Prostate gland (tissue), 2 donors: ENCODE measurements at regions of chr6 and their contacts with region 1.

Region 1: GRCh38 chr6:27518881-27519795 is 46.2 kb upstream of the ZNF184 start:
- DNase-seq: peak; percentile 56
- H3K4me3 ChIP-seq: peak overlapping the region; percentile 55 to 78
- H3K27ac ChIP-seq: peak overlapping the region; percentile 85 to 95
- H3K4me1 ChIP-seq: no peaks in the 10 kb centered on the region
- H3K27me3 ChIP-seq: no peaks in the 10 kb centered on the region
- CTCF ChIP-seq: peak; percentile 39 to 69 (median 55)
- POLR2A ChIP-seq: no peak

Region 2: DNA sequence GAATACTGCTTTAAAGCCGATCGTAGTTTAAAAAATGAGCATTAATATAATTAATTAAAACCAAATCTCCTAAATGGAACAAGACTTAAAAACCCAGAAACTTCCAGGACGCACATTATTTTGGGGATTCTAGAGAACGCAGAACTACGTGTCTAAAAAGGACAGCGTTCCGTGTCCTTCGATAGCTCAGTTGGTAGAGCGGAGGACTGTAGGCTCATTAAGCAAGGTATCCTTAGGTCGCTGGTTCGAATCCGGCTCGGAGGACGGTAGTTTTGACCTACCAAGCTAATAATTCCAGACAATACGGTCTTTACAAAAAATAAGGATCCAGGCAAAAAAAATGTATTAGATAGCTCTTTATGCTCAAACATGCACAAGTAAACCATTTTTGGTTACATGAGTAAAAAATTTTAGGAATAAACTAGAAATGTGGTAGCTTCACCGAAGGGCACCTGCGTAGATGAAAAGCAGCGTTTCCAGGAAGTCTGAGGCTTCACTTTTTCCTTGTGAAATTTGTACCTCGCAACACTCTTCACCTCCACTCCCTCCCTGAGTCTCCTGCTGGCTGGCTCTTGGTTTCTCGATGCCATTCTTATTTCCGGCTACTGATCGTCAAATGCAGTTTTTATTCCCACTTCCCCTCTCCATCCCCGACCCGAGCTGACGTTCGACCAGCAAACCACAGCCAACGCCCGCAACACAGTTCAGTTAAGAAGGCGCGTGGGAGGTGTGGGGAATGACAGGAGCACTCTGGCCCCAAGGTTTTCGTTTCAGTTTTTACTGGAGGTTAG is 942.0 kb before region 1 on chr6:
- intact Hi-C with region 1: no loop called
- DNase-seq: no peak
- H3K4me3 ChIP-seq: no peak overlapping the region
- H3K27ac ChIP-seq: no peak overlapping the region
- H3K4me1 ChIP-seq: no peaks in the 10 kb centered on the region
- H3K27me3 ChIP-seq: no peaks in the 10 kb centered on the region
- CTCF ChIP-seq: no peak
- POLR2A ChIP-seq: no peak

Region 3: DNA sequence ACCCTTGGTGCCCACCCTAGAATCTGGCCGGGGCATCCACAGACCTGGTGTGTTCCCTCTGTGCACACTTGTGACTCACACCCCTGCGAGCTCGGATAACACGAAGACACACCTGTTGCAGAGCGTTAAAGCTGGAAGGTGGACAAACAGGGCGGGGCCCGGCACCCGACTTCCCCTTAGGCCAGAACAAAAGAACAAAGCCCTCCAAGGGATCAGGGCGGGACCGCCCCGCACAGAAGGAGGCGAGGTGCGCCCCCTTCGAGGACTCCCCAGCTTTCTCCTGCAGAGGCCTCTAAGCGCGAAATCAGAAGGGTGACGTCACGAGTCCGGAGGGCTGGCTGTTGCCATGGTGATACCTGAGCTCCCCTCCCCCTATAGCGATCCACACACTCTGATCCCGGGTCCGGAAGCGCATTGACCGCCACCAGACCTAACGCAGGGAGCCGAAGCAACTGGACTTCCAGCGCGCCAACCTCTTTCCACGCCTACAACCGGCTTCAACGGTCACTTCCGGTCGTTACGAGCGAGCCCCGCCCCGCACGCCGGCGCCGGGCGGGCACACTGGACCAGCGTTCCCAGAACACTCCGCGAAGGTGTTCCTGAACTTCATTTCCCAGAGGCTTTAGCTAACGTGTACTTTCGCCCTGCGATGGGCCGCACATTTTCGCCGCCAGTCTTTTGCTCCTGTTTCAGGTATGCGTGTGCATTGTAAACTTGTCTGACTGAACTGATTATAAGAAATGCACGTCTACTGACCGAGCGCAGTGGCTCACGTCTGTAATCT is 46.3 kb before region 1 on chr6 and contains the start of gene ZNF184:
- intact Hi-C with region 1: loop called (anchors 5 kb)
- DNase-seq: peak; percentile 96
- H3K4me3 ChIP-seq: peak within 1 kb of the TSS; percentile 63 to 80
- H3K27ac ChIP-seq: peak within 1 kb of the TSS; percentile 92 to 94
- H3K4me1 ChIP-seq: no peaks in the 10 kb centered on the region
- H3K27me3 ChIP-seq: no peaks in the 10 kb centered on the region
- CTCF ChIP-seq: peak in 3 of 4 experiments; percentile 4 to 19 (median 9)
- POLR2A ChIP-seq: peak; percentile 70
- total RNA-seq, gene ZNF184: 6.2 to 8.2 TPM

Region 4: GRCh38 chr6:27753668-27754407 is 234.7 kb after region 1 on chr6:
- intact Hi-C with region 1: loop called (anchors 1 kb)
- DNase-seq: peak; percentile 26
- H3K4me3 ChIP-seq: peak overlapping the region; percentile 18 to 19
- H3K27ac ChIP-seq: no peak overlapping the region
- H3K4me1 ChIP-seq: no peaks in the 10 kb centered on the region
- H3K27me3 ChIP-seq: no peaks in the 10 kb centered on the region
- CTCF ChIP-seq: no peak
- POLR2A ChIP-seq: no peak

Region 5: DNA sequence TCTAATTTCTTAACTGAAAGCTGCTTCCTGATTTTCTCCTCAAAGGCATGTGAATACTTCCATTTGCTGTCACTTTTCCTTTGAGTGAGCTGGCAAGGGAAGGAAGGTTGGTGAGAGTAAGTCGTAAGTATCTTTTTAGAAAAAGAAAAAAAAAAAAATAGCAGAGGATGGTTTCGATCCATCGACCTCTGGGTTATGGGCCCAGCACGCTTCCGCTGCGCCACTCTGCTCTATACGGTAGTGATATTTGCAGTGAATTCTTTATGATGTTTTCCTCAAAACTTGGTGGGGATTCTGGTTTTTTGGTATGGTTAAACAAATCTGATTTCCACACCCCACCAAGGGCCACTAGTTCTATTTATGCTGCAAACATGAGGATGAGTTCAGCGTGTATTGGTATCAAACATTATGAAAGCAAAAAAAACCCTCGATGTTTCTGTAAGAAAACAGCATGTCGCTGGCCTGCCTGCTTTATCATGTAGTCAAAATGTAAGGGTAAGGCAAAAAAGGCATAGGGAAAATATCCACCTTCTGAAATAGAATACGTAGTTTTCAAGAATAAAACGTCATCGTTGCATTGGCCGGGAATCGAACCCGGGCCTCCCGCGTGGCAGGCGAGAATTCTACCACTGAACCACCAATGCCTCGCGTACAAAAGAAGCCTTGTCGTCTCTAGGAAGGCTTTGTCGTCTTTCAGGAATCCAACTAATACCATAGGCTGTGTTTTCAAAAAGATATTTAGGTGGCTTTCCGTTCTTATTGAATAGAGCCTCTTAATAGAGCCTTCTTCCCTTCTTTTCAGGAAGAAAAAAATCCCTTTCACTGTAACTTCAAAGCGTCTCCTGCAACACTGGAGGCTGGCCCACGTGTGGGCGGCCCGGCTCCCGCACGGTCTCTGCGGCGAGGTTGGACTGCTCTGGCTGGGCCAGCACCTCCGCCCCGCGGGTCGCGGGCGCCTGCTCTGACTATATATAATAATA is 383.5 kb after region 1 on chr6:
- intact Hi-C with region 1: loop called (anchors 2 kb)
- DNase-seq: peak; percentile 79
- H3K4me3 ChIP-seq: peak overlapping the region; percentile 40
- H3K27ac ChIP-seq: peak overlapping the region; percentile 61 to 79
- H3K4me1 ChIP-seq: no peaks in the 10 kb centered on the region
- H3K27me3 ChIP-seq: no peaks in the 10 kb centered on the region
- CTCF ChIP-seq: no peak
- POLR2A ChIP-seq: no peak

Region 6: GRCh38 chr6:28090917-28091586 is 571.9 kb after region 1 on chr6:
- intact Hi-C with region 1: no loop called
- DNase-seq: no peak
- H3K4me3 ChIP-seq: no peak overlapping the region
- H3K27ac ChIP-seq: no peak overlapping the region
- H3K4me1 ChIP-seq: no peaks in the 10 kb centered on the region
- H3K27me3 ChIP-seq: no peaks in the 10 kb centered on the region
- CTCF ChIP-seq: no peak
- POLR2A ChIP-seq: no peak